PC-3 (cell line): ENCODE measurements at regions of chr12 and their contacts with region 1.

Region 1: GRCh38 chr12:116037941-116038837 is 239.3 kb downstream of the MED13L start:
- DNase-seq: peak; percentile 95
- ATAC-seq: peak; percentile 91
- H3K4me3 ChIP-seq: peak overlapping the region; percentile 6; the same call in 1 of the 2 replicates
- H3K27ac ChIP-seq: peak overlapping the region; percentile 70
- H3K4me1 ChIP-seq: peaks cover 53% of the 10 kb centered on the region
- H3K27me3 ChIP-seq: no peaks in the 10 kb centered on the region
- CTCF ChIP-seq: no peak

Region 2: DNA sequence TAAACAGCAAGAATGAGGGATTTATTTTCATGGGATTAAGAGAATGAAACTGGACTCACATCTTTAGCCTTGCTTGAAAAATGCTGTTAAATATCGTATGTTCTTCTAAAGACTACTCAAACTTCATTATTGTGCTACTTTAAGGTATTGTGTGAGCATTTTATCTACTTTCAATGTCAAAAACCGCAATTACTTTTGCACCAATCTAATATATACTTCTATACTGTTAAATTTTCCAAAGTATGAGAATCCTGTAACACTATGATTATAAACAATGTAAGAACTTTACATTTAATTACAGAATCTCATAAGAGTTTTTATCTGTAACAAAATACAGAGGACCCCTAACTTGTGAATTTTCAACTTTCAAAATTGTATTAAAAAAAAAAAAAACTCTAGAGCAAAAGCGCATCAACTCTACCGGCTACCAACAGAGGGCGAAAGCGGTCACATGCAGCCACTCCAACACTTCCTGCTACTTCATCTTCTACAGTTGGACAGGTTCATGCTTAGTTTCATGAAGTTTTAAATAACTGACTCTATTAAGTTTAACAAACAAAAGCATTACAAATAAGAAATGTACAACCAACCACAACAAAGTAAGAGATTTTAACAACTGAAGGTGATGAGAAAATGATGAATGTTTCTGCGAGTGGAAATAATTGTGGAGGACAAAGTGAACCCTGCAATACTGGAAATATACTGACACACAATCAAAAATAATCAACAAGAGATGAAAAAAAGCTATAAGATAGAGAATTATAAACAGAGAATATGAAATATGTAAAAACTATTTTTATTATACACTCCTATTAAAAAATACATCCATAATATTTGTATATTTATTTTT is 28.4 kb after region 1 on chr12:
- CTCF ChIA-PET with region 1: interaction called, 6 read pairs
- POLR2A ChIA-PET with region 1: no interaction called
- intact Hi-C with region 1: loop called (anchors 5 kb)
- DNase-seq: peak; percentile 66
- ATAC-seq: peak; percentile 61
- H3K4me3 ChIP-seq: no peak overlapping the region
- H3K27ac ChIP-seq: no peak overlapping the region
- H3K4me1 ChIP-seq: peaks cover 6% of the 10 kb centered on the region
- H3K27me3 ChIP-seq: no peaks in the 10 kb centered on the region
- CTCF ChIP-seq: peak; percentile 98